BJ (cell line): ENCODE measurements at regions of chr16 and their contacts with region 1.

Region 1: GRCh38 chr16:67561824-67562525 is 351 bp upstream of the CTCF start:
- DNase-seq: peak; percentile 86
- H3K4me3 ChIP-seq: peak overlapping the region; percentile 67
- H3K27me3 ChIP-seq: no peaks in the 10 kb centered on the region
- CTCF ChIP-seq: no peak

Region 2: DNA sequence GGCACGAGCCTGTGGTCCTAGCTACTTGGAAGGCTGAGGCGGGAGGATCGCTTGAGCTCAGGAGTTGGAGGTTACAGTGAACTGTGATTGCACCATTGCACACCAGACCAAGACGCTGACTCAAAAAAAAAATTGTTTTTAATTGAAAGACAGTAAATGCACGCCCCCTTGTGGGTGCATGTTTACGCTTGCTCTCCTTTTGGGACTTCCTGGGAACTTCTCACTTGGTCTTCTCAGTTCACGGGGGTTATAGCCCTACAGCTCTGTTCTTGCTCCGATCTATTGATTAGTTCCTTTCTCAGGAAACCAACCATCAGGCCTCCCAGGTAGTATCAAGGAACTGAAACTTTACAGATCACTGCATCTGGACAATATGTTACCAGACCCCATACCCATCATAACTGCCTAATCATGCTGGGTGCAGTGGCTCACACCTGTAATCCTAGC is 47.6 kb before region 1 on chr16:
- CTCF ChIA-PET with region 1: interaction called, 14 read pairs
- POLR2A ChIA-PET with region 1: no interaction called
- DNase-seq: peak; percentile 24
- H3K4me3 ChIP-seq: no peak overlapping the region
- H3K27me3 ChIP-seq: no peaks in the 10 kb centered on the region
- CTCF ChIP-seq: peak; percentile 72

Region 3: GRCh38 chr16:67571981-67572431 is 10.0 kb after region 1 on chr16:
- CTCF ChIA-PET with region 1: interaction called, 13 read pairs
- POLR2A ChIA-PET with region 1: no interaction called
- DNase-seq: peak; percentile 63
- H3K4me3 ChIP-seq: no peak overlapping the region
- H3K27me3 ChIP-seq: no peaks in the 10 kb centered on the region
- CTCF ChIP-seq: no peak

Region 4: GRCh38 chr16:67608364-67608763 is 46.4 kb after region 1 on chr16:
- CTCF ChIA-PET with region 1: no interaction called
- POLR2A ChIA-PET with region 1: no interaction called
- DNase-seq: no peak
- H3K4me3 ChIP-seq: no peak overlapping the region
- H3K27me3 ChIP-seq: no peaks in the 10 kb centered on the region
- CTCF ChIP-seq: no peak

Region 5: DNA sequence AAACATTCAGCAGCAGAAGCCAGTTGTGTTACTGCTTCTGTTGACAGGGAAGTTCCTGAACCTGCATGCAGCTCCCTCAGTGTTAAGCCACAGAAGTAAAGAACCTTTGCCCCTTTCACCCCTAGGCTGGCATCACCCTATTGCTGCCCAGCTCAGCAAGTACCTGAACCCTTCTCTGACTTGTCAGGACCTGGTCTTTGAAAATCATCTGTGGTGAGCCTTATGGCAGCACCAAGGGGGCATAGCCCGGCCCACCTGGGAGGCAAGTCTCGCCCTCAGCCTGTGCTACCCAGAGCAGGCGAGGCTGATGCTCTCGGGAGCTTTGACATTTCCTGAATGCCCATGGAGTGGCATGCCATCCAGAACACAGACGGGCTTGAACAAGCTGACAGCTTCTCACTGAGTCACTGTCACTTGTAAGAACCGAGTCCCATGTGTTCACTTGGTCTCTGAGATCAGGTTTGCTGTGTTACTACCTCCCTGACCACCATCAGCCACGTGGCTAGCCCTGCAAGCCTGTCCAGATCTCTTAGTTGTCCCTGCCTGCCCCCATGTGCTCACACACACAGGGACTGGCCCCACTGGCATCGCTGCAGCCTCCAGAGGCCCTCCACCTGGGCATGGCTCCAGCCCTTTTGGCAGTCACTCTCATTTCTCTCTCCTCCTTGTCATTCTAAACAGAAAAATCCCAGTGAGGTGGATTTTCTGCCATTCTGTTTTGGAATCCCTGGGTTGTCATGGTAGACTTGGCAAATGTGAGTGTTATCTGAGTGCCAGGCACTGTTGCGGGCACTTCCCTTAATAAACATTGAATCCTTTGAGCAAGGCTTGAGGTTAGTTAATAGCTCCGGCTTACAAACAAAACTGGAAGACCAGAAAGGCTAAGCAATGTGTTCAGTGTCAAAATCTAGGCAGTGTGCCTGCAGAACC is 80.1 kb after region 1 on chr16:
- CTCF ChIA-PET with region 1: interaction called, 34 read pairs
- POLR2A ChIA-PET with region 1: no interaction called
- DNase-seq: no peak
- H3K4me3 ChIP-seq: no peak overlapping the region
- H3K27me3 ChIP-seq: peaks cover 12% of the 10 kb centered on the region
- CTCF ChIP-seq: no peak

Region 6: GRCh38 chr16:67667817-67668494 is 106.0 kb after region 1 on chr16:
- CTCF ChIA-PET with region 1: interaction called, 21 read pairs
- POLR2A ChIA-PET with region 1: no interaction called
- DNase-seq: peak; percentile 59
- H3K4me3 ChIP-seq: no peak overlapping the region
- H3K27me3 ChIP-seq: no peaks in the 10 kb centered on the region
- CTCF ChIP-seq: peak; percentile 96